Activated CD8-positive, alpha-beta T cell treated with anti-CD3 and anti-CD28 coated beads for 36 hours (primary cell): ENCODE measurements at regions of chr15 and their contacts with region 1.

Region 1: GRCh38 chr15:52078876-52079700 is 33.5 kb downstream of the BCL2L10 start:
- DNase-seq: peak; percentile 92
- ATAC-seq: peak; percentile 81
- H3K4me3 Mint-ChIP-seq: no peak overlapping the region
- H3K27ac Mint-ChIP-seq: no peak overlapping the region
- H3K4me1 Mint-ChIP-seq: peaks cover 16% of the 10 kb centered on the region
- H3K27me3 Mint-ChIP-seq: no peaks in the 10 kb centered on the region
- CTCF ChIP-seq: peak; percentile 86

Region 2: DNA sequence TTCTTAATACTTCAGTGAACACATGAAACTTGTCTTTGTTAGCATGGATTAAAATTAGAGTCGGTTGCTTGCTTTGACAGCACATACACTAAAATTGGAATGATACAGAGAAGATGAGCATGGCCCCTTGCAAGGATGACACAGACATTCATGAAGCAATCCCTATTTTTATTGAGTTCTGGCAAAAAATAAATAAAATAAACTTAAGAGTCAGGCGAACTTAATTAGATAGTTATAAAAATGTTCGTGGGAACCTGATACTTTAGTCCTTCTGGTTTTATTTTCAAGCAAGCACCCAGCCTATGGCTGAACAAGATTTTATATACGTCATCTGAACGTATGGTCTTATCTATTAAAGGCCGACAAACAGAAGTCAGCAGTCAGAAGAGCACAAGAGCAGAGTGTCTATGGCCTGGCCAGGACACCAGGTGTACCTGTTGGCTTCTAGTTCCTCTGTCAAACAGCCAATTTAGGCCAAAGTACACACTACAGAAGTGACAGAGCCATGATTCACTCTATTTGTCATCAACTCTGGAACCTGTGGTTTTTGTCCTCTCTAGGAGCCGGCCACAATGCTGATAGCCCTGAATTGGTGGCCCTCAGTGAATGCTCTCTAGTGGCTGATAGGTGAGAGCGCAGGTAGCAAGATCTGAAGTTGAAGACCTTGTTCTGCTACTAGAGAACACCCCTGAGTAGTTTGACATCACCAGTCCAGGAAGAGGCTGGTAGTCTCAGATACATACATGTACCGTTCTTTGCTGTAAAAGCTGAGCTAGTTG is 171.8 kb before region 1 on chr15:
- CTCF ChIA-PET with region 1: no interaction called
- POLR2A ChIA-PET with region 1: no interaction called
- intact Hi-C with region 1: no loop called
- DNase-seq: peak; percentile 14
- ATAC-seq: peak; percentile 60
- H3K4me3 Mint-ChIP-seq: no peak overlapping the region
- H3K27ac Mint-ChIP-seq: no peak overlapping the region
- H3K4me1 Mint-ChIP-seq: no peaks in the 10 kb centered on the region
- H3K27me3 Mint-ChIP-seq: no peaks in the 10 kb centered on the region
- CTCF ChIP-seq: no peak

Region 3: DNA sequence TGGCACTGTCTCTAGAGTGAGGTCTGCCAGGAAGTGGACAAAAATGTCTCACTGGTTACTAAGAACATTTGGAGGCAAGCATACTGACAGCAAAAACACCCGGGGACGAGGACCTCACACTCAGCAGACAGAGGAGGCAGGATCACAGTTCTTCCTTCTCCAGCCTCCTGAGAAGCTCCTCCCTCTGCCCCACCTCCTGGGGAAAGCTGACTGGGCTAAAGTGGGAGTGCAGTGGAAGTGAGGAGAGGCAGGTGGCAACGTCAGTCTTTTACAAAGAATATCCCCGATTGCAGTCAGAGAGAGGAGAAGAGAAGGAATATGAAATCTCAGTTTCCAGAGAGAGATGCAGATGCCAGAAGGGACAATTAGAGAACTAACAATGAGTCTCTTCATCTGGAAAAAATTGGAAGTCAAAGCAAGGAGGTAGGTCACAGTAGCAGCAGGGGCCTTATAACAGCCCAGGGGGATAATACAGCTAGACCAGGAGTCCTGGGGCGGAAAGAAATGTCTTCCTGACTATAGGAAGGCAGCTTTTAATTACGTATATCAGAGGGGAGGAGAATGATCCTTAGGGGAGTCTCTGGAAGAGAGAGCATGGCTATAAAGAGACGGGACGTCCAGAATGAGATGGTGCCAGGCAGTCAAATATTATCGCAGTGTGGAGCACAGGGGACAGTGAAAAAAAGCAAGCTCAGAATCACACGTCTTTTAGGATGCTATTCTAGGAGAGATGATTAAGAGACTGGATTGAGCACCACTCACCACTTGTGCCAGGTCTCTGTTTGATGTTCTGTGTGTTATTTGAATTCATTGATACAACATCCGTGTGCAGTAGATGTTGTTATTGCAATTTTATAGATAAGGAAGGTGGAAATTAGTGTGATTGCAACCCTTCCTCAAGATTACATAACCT is 154.7 kb before region 1 on chr15:
- CTCF ChIA-PET with region 1: no interaction called
- POLR2A ChIA-PET with region 1: no interaction called
- intact Hi-C with region 1: no loop called
- DNase-seq: no peak
- ATAC-seq: no peak
- H3K4me3 Mint-ChIP-seq: no peak overlapping the region
- H3K27ac Mint-ChIP-seq: no peak overlapping the region
- H3K4me1 Mint-ChIP-seq: no peaks in the 10 kb centered on the region
- H3K27me3 Mint-ChIP-seq: no peaks in the 10 kb centered on the region
- CTCF ChIP-seq: no peak

Region 4: DNA sequence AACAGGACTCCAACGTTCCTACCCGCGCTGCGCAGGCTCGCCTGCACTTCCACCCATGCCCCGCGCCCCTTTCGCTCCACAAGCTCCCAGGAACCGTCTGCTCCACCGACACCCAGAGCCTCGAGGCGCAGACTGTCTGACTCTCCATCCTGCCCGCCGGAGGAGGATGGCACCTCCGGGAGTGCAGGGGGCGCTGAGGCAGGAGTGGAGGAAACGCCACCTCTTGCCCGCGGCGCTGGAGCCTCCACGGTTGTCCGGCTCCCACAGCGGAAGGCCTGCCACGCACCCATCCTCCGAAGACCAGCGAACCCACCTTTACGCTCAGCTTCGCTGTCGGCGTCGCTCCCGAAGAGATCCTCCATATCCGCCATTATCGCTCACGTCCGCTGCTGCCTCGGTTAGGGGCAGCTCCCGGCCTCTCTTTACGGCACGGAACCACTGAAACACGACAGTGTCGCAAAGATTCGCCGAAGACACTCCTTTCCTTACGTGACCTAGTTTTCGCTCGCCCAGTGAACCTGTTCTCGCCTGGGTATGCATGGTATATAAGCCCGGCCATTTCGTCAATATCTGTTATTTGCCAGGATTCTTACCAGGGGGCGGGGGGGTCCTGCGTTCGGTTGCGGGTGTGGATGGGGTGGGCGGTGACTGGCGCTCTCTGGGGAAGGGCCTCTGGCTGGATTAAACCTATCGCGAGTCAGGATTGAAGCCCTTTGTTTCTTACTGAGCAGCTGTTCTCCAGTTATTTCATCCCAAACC is 107.5 kb before region 1 on chr15 and contains the start of gene LEO1:
- CTCF ChIA-PET with region 1: interaction called, 16 read pairs
- POLR2A ChIA-PET with region 1: interaction called, 5 read pairs
- intact Hi-C with region 1: no loop called
- DNase-seq: peak; percentile 94
- ATAC-seq: peak; percentile 94
- H3K4me3 Mint-ChIP-seq: peak within 1 kb of the TSS; percentile 94
- H3K27ac Mint-ChIP-seq: peak within 1 kb of the TSS; percentile 89
- H3K4me1 Mint-ChIP-seq: peaks cover 15% of the 10 kb centered on the region
- H3K27me3 Mint-ChIP-seq: peaks cover 1% of the 10 kb centered on the region
- CTCF ChIP-seq: no peak
- total RNA-seq, gene LEO1: 28.9 to 31.1 TPM

Region 5: GRCh38 chr15:51982013-51982769 is 96.9 kb before region 1 on chr15:
- CTCF ChIA-PET with region 1: interaction called, 34 read pairs
- POLR2A ChIA-PET with region 1: no interaction called
- intact Hi-C with region 1: loop called (anchors 1 kb)
- DNase-seq: peak; percentile 76
- ATAC-seq: peak; percentile 95
- H3K4me3 Mint-ChIP-seq: peak overlapping the region; percentile 70
- H3K27ac Mint-ChIP-seq: peak overlapping the region; percentile 86
- H3K4me1 Mint-ChIP-seq: peaks cover 14% of the 10 kb centered on the region
- H3K27me3 Mint-ChIP-seq: no peaks in the 10 kb centered on the region
- CTCF ChIP-seq: peak; percentile 93

Region 6: GRCh38 chr15:52018693-52019387 is 60.2 kb before region 1 on chr15 and contains the start of gene MAPK6:
- CTCF ChIA-PET with region 1: interaction called, 12 read pairs
- POLR2A ChIA-PET with region 1: no interaction called
- intact Hi-C with region 1: no loop called
- DNase-seq: peak; percentile 95
- ATAC-seq: peak; percentile 82
- H3K4me3 Mint-ChIP-seq: peak within 1 kb of the TSS; percentile 90
- H3K27ac Mint-ChIP-seq: peak within 1 kb of the TSS; percentile 97
- H3K4me1 Mint-ChIP-seq: peaks cover 34% of the 10 kb centered on the region
- H3K27me3 Mint-ChIP-seq: no peaks in the 10 kb centered on the region
- CTCF ChIP-seq: no peak
- total RNA-seq, gene MAPK6: 40.5 to 42.2 TPM

Region 7: DNA sequence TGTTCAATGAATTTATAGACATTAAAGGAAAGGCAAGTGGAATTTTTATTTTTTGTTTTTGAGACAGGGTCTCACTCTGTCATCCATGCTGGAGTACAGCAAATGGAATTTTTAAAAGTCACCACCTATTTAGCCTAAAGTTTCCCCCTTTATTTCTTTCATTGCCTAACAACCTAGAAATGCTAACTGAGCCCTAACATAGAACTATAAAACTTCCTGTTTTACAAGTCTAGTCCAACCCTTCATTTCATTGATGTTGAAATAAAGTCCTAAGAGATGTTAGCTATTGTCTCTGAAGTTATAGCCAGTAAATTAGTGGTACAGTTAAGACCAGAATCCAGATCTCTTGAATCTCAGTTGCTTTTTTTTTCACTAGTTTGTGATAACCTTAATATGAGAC is 21.1 kb before region 1 on chr15:
- CTCF ChIA-PET with region 1: interaction called, 17 read pairs
- POLR2A ChIA-PET with region 1: no interaction called
- intact Hi-C with region 1: no loop called
- DNase-seq: no peak
- ATAC-seq: no peak
- H3K4me3 Mint-ChIP-seq: no peak overlapping the region
- H3K27ac Mint-ChIP-seq: no peak overlapping the region
- H3K4me1 Mint-ChIP-seq: no peaks in the 10 kb centered on the region
- H3K27me3 Mint-ChIP-seq: no peaks in the 10 kb centered on the region
- CTCF ChIP-seq: no peak

Region 8: DNA sequence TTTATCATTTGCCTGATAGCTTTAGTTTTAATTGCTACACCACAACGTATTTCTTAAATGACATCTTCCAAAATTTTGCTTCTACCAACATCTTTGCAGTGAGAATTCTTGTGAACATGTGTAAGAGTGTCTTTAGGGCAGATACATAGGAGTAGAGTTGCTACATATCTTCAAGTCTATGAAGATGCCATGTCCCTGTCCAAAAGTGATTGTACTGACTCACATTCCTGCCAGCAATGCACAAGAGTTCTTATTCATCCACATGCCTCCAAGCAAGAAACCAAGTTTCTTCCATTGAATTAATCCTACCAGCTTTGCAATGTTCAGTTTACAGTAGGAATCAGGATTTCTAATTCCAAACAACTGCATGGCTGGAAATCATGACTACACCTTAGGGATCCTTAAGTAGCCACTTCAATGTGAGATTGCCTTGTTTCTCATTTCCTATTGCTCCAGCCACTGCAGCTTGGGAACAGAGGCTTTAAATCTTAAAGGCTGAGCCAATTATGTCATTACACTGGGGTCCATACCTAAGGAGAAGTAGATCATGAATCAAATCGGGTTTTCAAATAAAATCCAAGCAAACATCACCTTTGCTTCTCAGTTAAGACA is 11.0 kb before region 1 on chr15:
- CTCF ChIA-PET with region 1: interaction called, 51 read pairs
- POLR2A ChIA-PET with region 1: interaction called, 5 read pairs
- intact Hi-C with region 1: no loop called
- DNase-seq: no peak
- ATAC-seq: no peak
- H3K4me3 Mint-ChIP-seq: no peak overlapping the region
- H3K27ac Mint-ChIP-seq: no peak overlapping the region
- H3K4me1 Mint-ChIP-seq: peaks cover 15% of the 10 kb centered on the region
- H3K27me3 Mint-ChIP-seq: no peaks in the 10 kb centered on the region
- CTCF ChIP-seq: no peak

Region 9: GRCh38 chr15:52090193-52090592 is 11.1 kb after region 1 on chr15:
- CTCF ChIA-PET with region 1: interaction called, 10 read pairs
- POLR2A ChIA-PET with region 1: no interaction called
- intact Hi-C with region 1: no loop called
- DNase-seq: no peak
- ATAC-seq: no peak
- H3K4me3 Mint-ChIP-seq: no peak overlapping the region
- H3K27ac Mint-ChIP-seq: no peak overlapping the region
- H3K4me1 Mint-ChIP-seq: no peaks in the 10 kb centered on the region
- H3K27me3 Mint-ChIP-seq: peaks cover 4% of the 10 kb centered on the region
- CTCF ChIP-seq: no peak

Region 10: GRCh38 chr15:52217186-52217585 is 138.1 kb after region 1 on chr15:
- CTCF ChIA-PET with region 1: no interaction called
- POLR2A ChIA-PET with region 1: no interaction called
- intact Hi-C with region 1: no loop called
- DNase-seq: peak; percentile 37
- ATAC-seq: no peak
- H3K4me3 Mint-ChIP-seq: no peak overlapping the region
- H3K27ac Mint-ChIP-seq: no peak overlapping the region
- H3K4me1 Mint-ChIP-seq: peaks cover 14% of the 10 kb centered on the region
- H3K27me3 Mint-ChIP-seq: no peaks in the 10 kb centered on the region
- CTCF ChIP-seq: no peak

Region 11: GRCh38 chr15:52362502-52362901 is 283.4 kb after region 1 on chr15:
- CTCF ChIA-PET with region 1: no interaction called
- POLR2A ChIA-PET with region 1: no interaction called
- intact Hi-C with region 1: no loop called
- DNase-seq: no peak
- ATAC-seq: no peak
- H3K4me3 Mint-ChIP-seq: no peak overlapping the region
- H3K27ac Mint-ChIP-seq: peak overlapping the region; percentile 31
- H3K4me1 Mint-ChIP-seq: no peaks in the 10 kb centered on the region
- H3K27me3 Mint-ChIP-seq: no peaks in the 10 kb centered on the region
- CTCF ChIP-seq: no peak